Dendritic cell treated with granulocyte-macrophage colony-stimulating factor and Interleukin-4, amounts not matched to agents 40 ng/mL and 50 ng/mL, for 4 days (primary cell): ENCODE measurements at regions of chr7 and their contacts with region 1.

Region 1: DNA sequence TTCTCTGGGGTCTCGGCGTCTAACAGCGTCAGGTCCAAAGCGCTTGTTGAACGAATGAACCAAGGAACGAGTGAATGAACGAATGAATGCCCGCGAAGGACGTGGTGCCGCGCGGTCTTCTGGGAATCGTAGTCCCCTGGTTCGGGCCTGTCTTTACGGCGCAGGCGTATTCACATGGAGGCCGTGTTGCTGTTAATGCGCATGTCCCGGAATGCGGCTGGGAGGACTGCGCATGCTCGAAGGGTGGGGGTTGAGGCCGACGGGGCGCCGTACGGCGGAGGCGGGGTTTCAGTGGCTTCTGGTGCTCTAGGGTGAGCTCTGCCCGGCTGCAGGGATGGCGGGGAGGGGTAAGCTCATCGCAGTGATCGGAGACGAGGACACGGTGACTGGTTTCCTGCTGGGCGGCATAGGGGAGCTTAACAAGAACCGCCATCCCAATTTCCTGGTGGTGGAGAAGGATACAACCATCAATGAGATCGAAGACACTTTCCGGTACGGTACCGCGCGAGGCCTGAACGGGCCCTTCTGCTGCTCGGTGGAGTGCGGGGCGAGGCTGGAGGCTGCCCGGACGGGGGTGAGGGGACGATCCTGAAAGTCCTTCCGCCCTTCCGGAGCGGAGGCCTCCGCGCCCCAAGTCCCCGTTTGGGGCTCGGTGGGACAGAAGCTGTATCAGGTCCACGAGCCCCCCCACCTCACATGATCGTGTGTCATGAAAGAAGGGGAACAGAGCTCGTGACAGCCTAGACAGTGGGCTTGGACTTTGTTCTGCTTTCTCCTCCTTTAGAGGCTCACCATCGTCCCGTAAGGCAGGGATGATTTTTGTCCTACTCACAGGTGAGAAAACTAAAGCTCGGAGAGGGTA is at the start of gene ATP6V1F:
- H3K4me3 Mint-ChIP-seq: peak within 1 kb of the TSS; percentile 90
- H3K27ac Mint-ChIP-seq: peak within 1 kb of the TSS; percentile 94
- H3K4me1 Mint-ChIP-seq: peaks cover 53% of the 10 kb centered on the region
- H3K27me3 Mint-ChIP-seq: peaks cover 8% of the 10 kb centered on the region

Region 2: DNA sequence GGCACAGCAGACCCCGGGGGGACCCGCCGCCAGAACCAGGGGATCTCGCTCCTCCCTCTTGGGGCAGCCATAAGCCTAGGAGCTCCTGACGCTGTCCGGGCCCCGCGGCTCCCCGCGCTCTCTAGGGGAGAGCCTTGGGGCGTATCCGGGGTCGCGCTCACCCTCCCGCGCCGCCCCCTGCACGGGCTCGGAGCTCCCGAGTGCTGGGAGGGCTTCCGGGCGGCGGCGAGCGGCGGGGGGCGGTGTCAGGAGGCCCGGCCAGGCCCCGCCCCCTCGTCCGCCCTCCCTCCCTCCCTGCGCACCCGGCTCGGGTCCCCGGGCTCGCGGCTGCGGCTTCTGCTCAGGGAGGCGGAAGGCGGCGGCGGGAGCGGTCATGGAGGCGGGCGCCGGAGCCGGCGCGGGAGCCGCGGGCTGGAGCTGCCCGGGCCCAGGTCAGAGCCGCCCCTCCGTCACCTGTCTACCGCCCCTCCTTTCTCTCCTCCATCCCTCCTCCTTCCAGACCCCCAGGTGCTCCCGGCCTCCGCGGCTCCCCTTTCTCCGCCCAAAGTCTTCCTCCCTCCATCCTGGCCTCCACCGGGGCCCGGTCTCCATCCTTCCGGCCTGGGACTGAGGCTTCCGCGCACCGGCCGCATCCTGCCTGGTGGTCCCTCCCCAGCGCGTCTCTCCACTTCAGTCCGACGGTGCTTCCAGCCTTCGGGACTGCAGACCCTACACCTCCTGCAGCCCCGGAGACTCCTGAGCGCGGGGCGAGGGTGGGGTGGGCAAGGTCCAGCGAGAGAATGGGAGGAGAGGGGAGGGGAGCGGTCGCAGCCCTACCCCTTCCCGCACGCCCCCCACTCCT is 71.5 kb before region 1 on chr7:
- intact Hi-C with region 1: loop called (anchors 10 kb)
- H3K4me3 Mint-ChIP-seq: peak overlapping the region; percentile 79
- H3K27ac Mint-ChIP-seq: peak overlapping the region; percentile 13
- H3K4me1 Mint-ChIP-seq: peaks cover 19% of the 10 kb centered on the region
- H3K27me3 Mint-ChIP-seq: peaks cover 55% of the 10 kb centered on the region